ENCODE measurements at regions of chr12 and their contacts with region 1.

Region 1: GRCh38 chr12:40107098-40107802 is 1.4 kb upstream of the SLC2A13 start:
- DNase-seq: peak; percentile 92
- ATAC-seq: peak; percentile 69
- H3K4me3 ChIP-seq: peak overlapping the region; percentile 42
- H3K27ac ChIP-seq: no peak overlapping the region
- H3K4me1 ChIP-seq: peaks cover 8% of the 10 kb centered on the region
- H3K27me3 ChIP-seq: no peaks in the 10 kb centered on the region
- CTCF ChIP-seq: peak; percentile 98

Region 2: DNA sequence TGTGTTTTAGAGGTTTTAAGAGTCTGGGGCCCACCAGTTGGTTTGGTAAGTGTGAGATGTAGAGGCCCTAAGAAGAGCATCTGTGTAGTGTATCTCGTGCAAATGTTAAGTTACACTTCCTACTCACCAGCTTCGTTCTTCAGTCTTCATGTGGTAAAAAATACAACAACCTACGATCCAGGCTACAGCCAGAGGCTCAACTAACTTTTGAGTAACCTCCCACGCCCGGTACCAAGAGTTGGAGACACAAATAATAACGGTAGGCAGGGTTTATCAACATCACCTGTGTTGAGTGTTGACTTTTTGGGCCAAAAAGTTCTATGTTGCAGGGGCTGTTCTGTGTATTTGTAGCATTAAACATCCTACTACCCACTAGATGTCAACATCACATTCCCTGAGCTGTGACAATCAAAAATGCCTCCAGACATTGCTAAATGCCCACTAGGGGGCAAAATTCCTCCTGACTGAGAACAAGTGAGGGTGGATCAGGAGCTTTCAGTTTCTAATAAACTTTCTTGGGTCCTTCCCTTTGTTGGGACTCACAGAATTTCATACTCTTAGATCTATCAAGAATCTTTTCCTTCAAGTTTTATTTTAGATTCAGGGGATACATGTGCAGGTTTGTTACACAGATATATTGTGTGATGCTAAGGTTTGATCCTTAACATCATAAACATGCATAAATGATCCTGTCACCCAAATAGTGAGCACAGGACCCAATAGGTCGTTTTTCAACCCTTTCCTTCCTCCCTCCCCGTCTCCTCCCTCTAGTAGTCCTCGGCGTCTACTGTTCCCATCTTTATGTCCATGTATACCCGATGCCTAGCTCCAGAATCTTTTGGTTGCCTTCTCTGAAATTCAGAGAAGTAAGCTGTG is 96.1 kb before region 1 on chr12:
- intact Hi-C with region 1: loop called (anchors 10 kb)
- DNase-seq: no peak
- ATAC-seq: peak; percentile 97
- H3K4me3 ChIP-seq: peak overlapping the region; percentile 34
- H3K27ac ChIP-seq: no peak overlapping the region
- H3K4me1 ChIP-seq: peaks cover 12% of the 10 kb centered on the region
- H3K27me3 ChIP-seq: no peaks in the 10 kb centered on the region
- CTCF ChIP-seq: peak; percentile 86

Measured in upper lobe of right lung (tissue), 1 donor.